HepG2 (cell line): ENCODE measurements at regions of chr3 and their contacts with region 1.

Region 1: DNA sequence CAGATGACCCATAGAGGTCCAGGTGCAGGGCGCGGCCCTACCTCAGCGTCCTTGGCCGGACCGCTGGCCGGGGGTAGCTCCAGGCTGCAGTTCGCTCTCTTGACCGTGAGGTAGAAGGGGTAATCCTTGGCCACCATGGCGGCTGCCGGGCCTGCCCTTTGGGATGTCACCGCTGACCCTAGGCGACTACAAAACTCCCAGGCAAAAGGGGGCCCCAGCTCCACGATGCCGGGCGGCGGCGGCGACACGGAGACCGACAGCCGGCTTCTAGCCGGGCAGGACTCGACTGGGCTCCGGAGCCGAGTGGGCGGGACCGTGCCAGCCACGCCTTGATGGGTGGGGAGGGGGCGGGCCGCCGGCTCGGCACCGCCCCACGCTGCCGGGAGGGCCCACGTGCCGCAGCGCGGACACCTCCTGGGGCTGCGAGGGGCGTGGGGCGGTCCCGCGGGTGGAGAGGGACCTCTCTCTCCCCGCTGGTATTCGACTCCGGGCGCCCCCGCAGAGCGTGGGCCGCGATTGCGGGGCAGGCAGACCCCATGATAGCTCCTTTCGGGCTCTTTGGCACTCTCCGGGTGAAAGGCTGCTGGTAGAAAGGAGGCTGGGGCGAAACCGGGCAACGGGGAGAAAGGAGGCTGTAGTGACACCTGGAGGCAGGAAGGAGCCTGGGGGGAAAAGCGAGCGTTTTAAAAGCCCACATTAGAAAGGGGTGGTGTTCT is at the start of gene ARHGEF3:
- DNase-seq: peak; percentile 76
- ATAC-seq: peak; percentile 92
- H3K4me3 ChIP-seq: peak within 1 kb of the TSS; percentile 71 to 96 (median 85)
- H3K27ac ChIP-seq: peak within 1 kb of the TSS; percentile 47
- H3K4me1 ChIP-seq: peaks cover 53% of the 10 kb centered on the region
- H3K27me3 ChIP-seq: no peaks in the 10 kb centered on the region; a peak in 1 of 5 replicates
- CTCF ChIP-seq: peak; percentile 77
- EP300 ChIP-seq: no peak
- POLR2A ChIP-seq: peak; percentile 36 to 73
- RAD21 ChIP-seq: peak; percentile 76
- total RNA-seq, gene ARHGEF3: 23.1 and 32.8 TPM in 2 replicates

Region 2: DNA sequence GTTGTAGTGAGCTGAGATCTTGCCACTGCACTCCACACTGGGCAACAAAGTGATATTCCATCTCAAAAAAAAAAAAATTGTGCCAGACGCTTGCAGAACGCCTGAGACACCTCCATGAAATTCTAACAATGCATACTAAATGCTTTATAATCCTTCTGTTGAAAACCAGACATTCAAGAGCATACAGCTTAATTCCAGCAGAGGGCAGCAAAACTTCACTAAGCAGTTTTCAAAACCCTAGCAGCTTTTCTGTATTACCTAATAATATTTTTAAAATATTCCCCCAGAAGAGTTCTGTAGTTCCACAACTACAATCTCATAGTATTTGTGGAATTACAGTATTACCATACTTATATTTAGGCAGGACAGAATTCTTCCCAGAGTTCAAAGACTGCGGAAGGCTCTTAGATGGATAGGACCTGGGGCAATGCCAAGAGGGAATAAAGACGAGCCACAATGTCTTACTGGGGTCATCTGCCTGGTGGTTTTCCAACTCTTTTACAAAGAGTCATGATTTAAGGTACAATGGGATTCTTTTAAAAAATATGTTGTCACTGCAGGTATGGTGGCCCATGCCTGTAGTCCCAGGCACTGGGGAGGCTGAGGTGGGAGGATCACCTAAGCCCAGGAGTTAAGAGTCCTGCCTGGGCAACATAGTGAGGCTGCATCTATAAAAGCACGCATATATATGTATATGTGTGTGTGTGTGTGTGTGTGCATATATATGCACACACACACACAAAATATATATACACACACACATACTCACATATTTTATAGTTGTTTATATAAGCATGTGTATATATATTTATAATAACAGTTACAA is 99.1 kb before region 1 on chr3:
- CTCF ChIA-PET with region 1: interaction called, 38 read pairs
- POLR2A ChIA-PET with region 1: interaction called, 5 read pairs
- in situ Hi-C with region 1: loop called (anchors 5 kb)
- intact Hi-C with region 1: loop called (anchors 1 kb)
- DNase-seq: peak; percentile 63
- ATAC-seq: peak; percentile 66
- H3K4me3 ChIP-seq: no peak overlapping the region
- H3K27ac ChIP-seq: no peak overlapping the region
- H3K4me1 ChIP-seq: 0 out of 2 replicates have a peak, but pooled peaks cover 4% of the 10 kb centered on the region
- H3K27me3 ChIP-seq: no peaks in the 10 kb centered on the region; a peak in 1 of 5 replicates
- CTCF ChIP-seq: peak; percentile 72
- EP300 ChIP-seq: no peak
- POLR2A ChIP-seq: no peak
- RAD21 ChIP-seq: peak; percentile 72

Region 3: DNA sequence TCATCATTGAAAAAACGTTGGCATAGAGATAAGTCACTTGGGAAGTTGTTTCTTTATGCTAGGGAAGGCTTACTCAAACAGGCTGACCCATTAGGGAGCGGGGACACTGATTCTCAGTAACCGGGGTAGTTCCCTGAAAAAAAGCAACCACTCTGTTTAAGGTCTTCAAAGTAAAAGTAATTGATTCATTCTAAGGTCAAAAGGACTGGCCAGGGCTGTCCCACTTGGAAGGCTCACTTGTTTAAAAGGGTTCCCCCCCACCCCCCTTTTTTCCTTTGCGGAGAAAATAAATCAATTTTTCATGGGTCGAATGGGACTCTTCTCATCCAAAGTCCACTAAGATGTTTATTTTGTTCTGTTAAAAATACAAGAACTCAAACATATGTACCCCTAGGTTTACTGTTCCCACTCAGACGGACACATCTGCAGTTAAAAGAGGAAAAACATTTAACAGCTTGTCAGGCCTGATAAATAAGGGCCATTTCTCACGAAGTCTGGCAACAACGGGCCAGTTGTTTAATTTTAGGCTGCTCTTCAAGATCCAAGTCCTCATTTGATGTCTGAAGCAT is 53.1 kb before region 1 on chr3:
- CTCF ChIA-PET with region 1: no interaction called
- POLR2A ChIA-PET with region 1: interaction called, 14 read pairs
- in situ Hi-C with region 1: no loop called
- intact Hi-C with region 1: loop called (anchors 5 kb)
- DNase-seq: peak; percentile 4
- ATAC-seq: peak; percentile 93
- H3K4me3 ChIP-seq: no peak overlapping the region
- H3K27ac ChIP-seq: peak overlapping the region; percentile 42
- H3K4me1 ChIP-seq: peaks cover 35% of the 10 kb centered on the region
- H3K27me3 ChIP-seq: no peaks in the 10 kb centered on the region
- CTCF ChIP-seq: no peak
- EP300 ChIP-seq: peak in 1 of 2 experiments; percentile 73; a peak in 2 of 4 replicates
- POLR2A ChIP-seq: no peak
- RAD21 ChIP-seq: no peak

Region 4: DNA sequence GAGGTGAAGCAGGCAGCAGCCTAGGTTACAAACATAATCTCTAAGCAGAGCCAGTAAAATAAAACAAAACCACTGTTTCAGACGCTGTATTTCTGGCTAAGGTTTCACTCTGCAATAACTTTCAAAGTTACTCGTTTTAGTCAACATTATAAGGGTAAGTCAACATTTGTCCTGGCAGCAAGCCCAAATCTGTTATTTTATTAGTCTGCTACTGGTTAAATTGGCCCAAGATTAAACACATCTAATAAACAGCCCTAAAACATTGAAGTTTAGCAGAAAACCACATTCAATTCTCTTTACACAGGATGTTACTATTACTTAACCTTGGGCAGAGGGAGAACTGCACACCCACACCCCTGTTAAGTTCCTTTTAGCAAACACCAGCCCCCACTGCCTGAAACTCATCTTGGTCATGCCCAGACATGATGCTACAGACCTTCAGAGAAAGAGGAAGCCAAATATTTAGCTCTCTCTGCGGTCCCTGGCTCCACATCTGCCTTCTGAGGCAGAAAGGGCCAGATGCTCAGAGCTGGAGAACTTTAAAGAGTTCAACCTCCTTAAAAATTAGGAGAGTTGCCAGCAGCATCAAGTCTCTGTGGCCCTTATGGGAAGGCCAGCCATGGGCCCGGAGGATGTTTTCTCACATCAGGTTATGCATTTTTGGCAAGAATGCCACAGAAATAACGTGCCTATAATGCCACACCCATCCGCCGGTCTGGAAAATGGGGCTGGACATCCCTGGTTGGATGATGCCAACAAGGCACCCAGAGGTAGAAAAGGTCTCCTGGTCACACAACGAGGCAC is 18.0 kb before region 1 on chr3:
- CTCF ChIA-PET with region 1: interaction called, 3 read pairs
- POLR2A ChIA-PET with region 1: interaction called, 27 read pairs
- in situ Hi-C with region 1: no loop called
- intact Hi-C with region 1: no loop called
- DNase-seq: peak; percentile 77
- ATAC-seq: peak; percentile 33
- H3K4me3 ChIP-seq: no peak overlapping the region
- H3K27ac ChIP-seq: peak overlapping the region; percentile 65
- H3K4me1 ChIP-seq: peaks cover 70% of the 10 kb centered on the region
- H3K27me3 ChIP-seq: no peaks in the 10 kb centered on the region
- CTCF ChIP-seq: no peak
- EP300 ChIP-seq: peak in 1 of 2 experiments; percentile 61; a peak in 2 of 4 replicates
- POLR2A ChIP-seq: no peak
- RAD21 ChIP-seq: no peak

Region 5: GRCh38 chr3:56819016-56819809 is 17.4 kb after region 1 on chr3:
- CTCF ChIA-PET with region 1: no interaction called
- POLR2A ChIA-PET with region 1: interaction called, 42 read pairs
- in situ Hi-C with region 1: no loop called
- intact Hi-C with region 1: loop called (anchors 2 kb)
- DNase-seq: peak; percentile 85
- ATAC-seq: peak; percentile 69
- H3K4me3 ChIP-seq: peak overlapping the region in 2 of 3 experiments; percentile 19 to 31; a peak in 3 of 6 replicates
- H3K27ac ChIP-seq: peak overlapping the region; percentile 58
- H3K4me1 ChIP-seq: peaks cover 69% of the 10 kb centered on the region
- H3K27me3 ChIP-seq: no peaks in the 10 kb centered on the region
- CTCF ChIP-seq: no peak
- EP300 ChIP-seq: peak in 1 of 2 experiments; percentile 44; a peak in 2 of 4 replicates
- POLR2A ChIP-seq: no peak
- RAD21 ChIP-seq: no peak